AG04449 (cell line): ENCODE measurements at regions of chr1 and their contacts with region 1.

Region 1: DNA sequence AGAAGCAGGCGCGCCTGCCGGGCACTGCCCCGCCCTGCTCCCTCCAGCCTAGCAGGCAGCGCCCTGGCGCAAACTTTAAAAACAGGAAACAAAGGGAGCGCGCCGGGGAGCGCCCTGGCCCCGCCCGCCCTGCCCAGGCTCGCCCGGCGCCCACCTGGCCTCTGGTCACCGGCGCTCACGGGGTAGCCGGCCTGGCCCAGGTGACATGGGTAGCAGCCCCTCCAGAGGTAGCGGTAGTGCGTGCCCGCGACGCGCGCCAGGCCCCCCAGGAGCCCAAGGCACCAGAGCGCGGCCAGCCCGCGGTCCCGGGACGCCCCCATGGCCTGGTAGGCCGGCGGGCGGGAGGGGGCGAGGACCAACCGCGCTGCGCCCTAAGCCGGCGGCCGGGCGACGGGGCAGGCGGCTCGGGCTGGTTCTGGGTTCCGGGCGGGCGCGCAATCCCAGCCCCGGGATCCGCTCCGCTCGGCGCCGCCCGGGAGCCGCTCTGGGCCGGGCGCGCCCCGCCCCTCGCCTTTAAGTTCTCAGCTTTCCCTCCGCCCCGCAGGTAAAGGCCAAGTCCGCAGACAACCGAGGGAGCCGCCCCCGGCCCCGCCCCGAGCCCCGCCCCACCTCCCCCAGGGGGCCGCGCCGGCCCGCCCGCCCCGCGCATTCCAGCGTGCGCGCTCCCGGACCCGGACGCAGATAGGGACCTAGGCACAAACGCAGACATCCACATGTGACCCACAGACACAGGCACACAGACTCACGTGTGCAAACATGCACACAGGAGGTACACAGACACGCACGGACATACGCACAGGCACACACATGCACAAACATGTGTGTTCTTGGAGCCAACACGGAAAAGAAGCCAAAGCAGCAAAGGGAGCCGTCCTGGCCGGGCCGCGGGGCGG is 76.7 kb downstream of the ARHGEF16 start:
- DNase-seq: no peak
- H3K4me3 ChIP-seq: peak overlapping the region; percentile 57
- CTCF ChIP-seq: no peak

Region 2: GRCh38 chr1:3237994-3238702 is 293.0 kb before region 1 on chr1:
- CTCF ChIA-PET with region 1: no interaction called
- POLR2A ChIA-PET with region 1: no interaction called
- DNase-seq: no peak
- H3K4me3 ChIP-seq: no peak overlapping the region
- CTCF ChIP-seq: no peak

Region 3: GRCh38 chr1:3518256-3518655 is 12.9 kb before region 1 on chr1:
- CTCF ChIA-PET with region 1: interaction called, 21 read pairs
- POLR2A ChIA-PET with region 1: interaction called, 3 read pairs
- DNase-seq: no peak
- H3K4me3 ChIP-seq: no peak overlapping the region
- CTCF ChIP-seq: peak; percentile 54

Region 4: DNA sequence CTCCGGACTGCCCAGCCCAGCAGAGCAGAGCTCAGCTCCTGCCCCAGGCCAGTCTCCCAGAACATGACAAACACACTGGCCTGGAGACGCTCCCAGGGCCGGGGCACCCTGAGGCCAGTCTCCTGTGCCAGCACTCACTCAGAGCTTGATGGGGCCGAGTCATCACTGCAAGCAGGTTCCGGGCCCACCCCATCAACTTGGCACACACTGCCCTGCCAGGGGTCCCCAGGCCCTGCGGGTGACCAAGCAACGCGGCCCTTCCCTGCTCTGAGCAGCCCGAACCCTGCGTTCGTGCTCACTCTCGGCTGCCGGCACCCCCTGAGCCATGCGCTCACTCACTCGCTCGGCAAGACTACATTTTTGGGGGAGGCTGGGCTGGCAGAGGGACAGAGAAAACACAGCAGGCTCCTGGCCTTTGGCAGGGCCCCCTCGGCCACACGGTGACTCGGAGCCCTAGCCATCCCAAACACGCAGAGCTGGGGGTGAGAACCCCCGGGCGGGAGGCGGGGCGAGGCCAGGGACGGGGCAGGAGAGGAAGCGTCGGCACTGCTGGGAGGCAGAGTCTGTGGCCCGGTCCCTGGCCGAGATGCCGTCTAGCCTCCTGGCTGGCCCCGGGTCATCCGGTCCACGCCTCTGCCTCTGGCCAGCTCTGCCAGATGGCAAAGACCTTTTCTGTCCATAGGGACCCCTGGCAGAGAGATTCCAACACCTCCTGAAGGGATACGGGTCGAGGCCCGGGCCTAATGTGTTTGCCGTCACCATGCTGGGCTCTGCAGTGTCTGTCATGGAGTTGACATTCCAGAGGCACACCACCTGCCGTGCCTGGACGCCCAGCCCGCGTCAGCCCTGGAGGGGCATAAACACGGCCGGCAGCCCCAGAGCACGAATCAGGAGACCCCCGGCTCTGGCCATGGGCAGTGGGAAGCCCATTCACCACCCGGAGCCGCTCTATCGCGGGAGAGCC is 12.2 kb after region 1 on chr1:
- CTCF ChIA-PET with region 1: no interaction called
- POLR2A ChIA-PET with region 1: interaction called, 13 read pairs
- DNase-seq: peak; percentile 78
- H3K4me3 ChIP-seq: no peak overlapping the region
- CTCF ChIP-seq: no peak

Region 5: DNA sequence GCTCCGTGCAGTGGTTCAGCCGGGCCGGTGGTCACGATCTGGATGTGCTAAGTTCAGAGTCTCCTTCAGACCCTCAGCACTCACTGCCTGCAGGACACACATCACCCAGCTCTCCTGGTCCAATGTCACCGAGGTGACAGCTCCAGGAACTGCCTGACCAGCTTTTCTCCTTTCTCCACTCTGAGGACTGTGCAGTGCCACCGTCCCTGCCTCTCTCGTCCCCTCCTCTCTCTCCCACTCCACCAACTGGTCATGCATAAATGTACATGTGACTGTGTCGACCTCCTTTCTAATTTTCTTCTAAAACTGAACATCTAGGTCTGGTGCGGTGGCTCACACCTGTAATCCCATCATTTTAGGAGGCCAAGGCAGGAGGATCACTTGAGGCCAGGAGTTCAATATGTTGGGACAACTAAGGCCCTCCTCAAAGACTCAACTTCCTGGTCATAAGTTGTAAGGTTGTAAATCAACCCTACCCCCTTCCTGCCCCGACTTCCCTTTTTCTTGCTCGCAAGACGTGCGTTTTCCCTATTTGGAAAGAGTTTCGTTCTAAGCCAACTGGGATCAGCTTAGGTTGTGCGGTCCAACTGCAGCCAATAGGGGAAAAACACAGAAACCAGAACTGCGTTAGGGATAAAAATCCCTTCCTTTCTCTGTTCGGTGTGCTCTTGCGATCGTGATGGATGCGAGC is 27.0 kb after region 1 on chr1:
- CTCF ChIA-PET with region 1: no interaction called
- POLR2A ChIA-PET with region 1: no interaction called
- DNase-seq: no peak
- H3K4me3 ChIP-seq: no peak overlapping the region
- CTCF ChIP-seq: no peak